ENCODE measurements at regions of chr2 and their contacts with region 1.

Region 1: DNA sequence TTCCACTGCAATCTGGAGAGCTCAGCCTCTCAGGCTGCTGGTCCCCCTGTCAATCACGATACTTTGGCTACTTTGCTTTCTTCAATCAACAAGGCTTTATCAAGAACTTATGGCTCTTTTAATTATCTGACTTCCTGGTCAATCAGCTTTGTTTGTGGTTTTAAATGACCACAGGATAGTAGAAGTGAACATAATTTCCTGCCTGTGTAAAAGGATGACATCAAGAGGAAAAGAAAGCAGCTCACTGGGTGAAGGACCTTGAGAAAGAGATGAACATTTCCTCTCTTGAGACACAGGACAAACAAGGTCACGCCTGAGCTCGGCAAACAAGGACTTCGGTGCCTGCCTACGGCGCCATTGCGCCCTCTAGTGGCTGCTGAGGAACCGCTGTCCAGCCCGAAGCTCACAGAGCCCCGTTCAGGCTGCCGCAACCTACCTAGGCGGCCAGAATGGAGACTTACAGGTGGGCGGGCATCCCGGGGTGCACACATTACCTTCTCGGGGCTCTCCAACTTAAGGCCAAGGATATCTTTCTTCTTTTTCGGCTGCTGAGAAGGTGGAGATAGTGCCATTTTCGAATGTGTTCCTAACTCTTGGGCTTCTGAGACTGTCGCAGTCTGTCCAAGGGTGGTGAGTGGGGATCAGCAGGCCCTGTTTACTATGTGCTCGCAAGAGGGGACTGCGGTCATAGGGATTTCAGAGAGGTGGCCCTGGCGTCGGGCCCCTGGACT is 54.0 kb downstream of the IL1RL2 start:
- DNase-seq: peak; percentile 82
- H3K4me3 Mint-ChIP-seq: peak overlapping the region; percentile 4
- H3K27ac Mint-ChIP-seq: peak overlapping the region; percentile 51
- H3K4me1 Mint-ChIP-seq: peaks cover 36% of the 10 kb centered on the region
- H3K27me3 Mint-ChIP-seq: no peaks in the 10 kb centered on the region

Region 2: GRCh38 chr2:102005989-102006885 is 234.6 kb before region 1 on chr2:
- intact Hi-C with region 1: loop called (anchors 1 kb)
- DNase-seq: no peak
- H3K4me3 Mint-ChIP-seq: no peak overlapping the region
- H3K27ac Mint-ChIP-seq: no peak overlapping the region
- H3K4me1 Mint-ChIP-seq: peaks cover 14% of the 10 kb centered on the region
- H3K27me3 Mint-ChIP-seq: peaks cover 2% of the 10 kb centered on the region

Region 3: GRCh38 chr2:102187496-102188150 is 53.2 kb before region 1 on chr2:
- intact Hi-C with region 1: loop called (anchors 1 kb)
- DNase-seq: no peak
- H3K4me3 Mint-ChIP-seq: peak overlapping the region; percentile 73
- H3K27ac Mint-ChIP-seq: peak overlapping the region; percentile 63
- H3K4me1 Mint-ChIP-seq: peaks cover 17% of the 10 kb centered on the region
- H3K27me3 Mint-ChIP-seq: peaks cover 23% of the 10 kb centered on the region

Region 4: DNA sequence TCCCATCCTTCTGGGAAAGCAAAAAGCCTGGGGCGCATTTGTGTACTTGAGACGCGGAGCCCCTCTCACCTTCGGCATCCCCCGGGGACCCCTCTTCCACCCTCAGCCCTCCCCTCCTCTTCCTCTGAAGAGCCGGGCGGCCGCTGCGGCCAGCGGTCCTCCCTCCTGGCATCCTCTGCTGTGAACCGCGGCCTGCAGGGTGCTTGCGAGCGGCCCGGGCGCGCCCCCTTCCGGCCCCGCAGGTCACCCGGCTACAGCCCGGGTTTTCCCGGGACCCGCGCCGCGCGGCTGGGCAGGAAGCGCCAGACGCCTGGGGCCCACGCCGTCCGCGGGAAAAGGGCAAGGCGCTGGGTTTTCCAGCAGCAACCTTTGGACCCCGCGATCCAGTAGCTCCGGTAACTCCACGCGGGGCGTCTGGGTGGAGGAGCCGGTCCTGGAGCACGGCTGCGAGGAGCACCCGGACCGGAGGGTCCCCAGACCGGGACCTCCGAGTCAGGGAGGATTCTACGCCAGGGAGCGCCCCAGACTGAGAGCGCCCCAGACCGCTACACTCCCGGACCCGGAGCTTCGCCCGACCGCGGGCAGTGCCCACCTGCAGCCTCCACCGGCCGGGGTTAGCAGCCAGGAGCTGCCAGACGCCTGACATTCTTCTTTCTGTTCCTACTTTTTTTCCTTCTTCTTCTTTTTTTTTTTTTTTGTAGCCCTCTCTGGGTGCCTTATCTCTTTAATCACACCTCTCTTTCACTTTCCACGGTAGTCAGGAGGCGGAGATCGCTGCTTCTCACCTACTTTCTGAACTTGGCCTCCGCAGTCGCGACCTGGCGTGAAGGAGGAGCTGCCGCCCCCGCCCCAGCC is 114.9 kb after region 1 on chr2 and contains the start of gene IL18R1:
- intact Hi-C with region 1: loop called (anchors 1 kb)
- DNase-seq: peak; percentile 71
- H3K4me3 Mint-ChIP-seq: peak within 1 kb of the TSS; percentile 97
- H3K27ac Mint-ChIP-seq: peak within 1 kb of the TSS; percentile 96
- H3K4me1 Mint-ChIP-seq: peaks cover 47% of the 10 kb centered on the region
- H3K27me3 Mint-ChIP-seq: no peaks in the 10 kb centered on the region
- total RNA-seq, gene IL18R1: 57.8 and 61.3 TPM in 2 replicates

Region 5: GRCh38 chr2:102442967-102443828 is 202.4 kb after region 1 on chr2:
- intact Hi-C with region 1: loop called (anchors 1 kb)
- DNase-seq: peak; percentile 38
- H3K4me3 Mint-ChIP-seq: peak overlapping the region; percentile 56
- H3K27ac Mint-ChIP-seq: peak overlapping the region; percentile 72
- H3K4me1 Mint-ChIP-seq: peaks cover 19% of the 10 kb centered on the region
- H3K27me3 Mint-ChIP-seq: no peaks in the 10 kb centered on the region

Region 6: GRCh38 chr2:102449370-102449974 is 208.7 kb after region 1 on chr2:
- intact Hi-C with region 1: loop called (anchors 1 kb)
- DNase-seq: peak; percentile 54
- H3K4me3 Mint-ChIP-seq: no peak overlapping the region
- H3K27ac Mint-ChIP-seq: no peak overlapping the region
- H3K4me1 Mint-ChIP-seq: peaks cover 20% of the 10 kb centered on the region
- H3K27me3 Mint-ChIP-seq: no peaks in the 10 kb centered on the region

Region 7: GRCh38 chr2:102615622-102616436 is 375.0 kb after region 1 on chr2:
- intact Hi-C with region 1: loop called (anchors 10 kb)
- DNase-seq: no peak
- H3K4me3 Mint-ChIP-seq: no peak overlapping the region
- H3K27ac Mint-ChIP-seq: no peak overlapping the region
- H3K4me1 Mint-ChIP-seq: peaks cover 9% of the 10 kb centered on the region
- H3K27me3 Mint-ChIP-seq: peaks cover 56% of the 10 kb centered on the region

Measured in activated T-helper 1 cell treated with anti-CD3 and anti-CD28 coated beads, Interleukin-12 subunit alpha, Interleukin-12 subunit beta, Interleukin-2, Interleukin-4 antibody, amounts not matched to agents 30 ng/mL and 10 ng/mL and 1 ng/mL, durations not matched to agents 14 hours and 24 hours and 36 hours (primary cell).